Lower leg skin (tissue), 4 donors: ENCODE measurements at regions of chr15 and their contacts with region 1.

Region 1: GRCh38 chr15:99029341-99030144 is 22.0 kb upstream of the PGPEP1L start:
- DNase-seq: no peak
- H3K4me3 ChIP-seq: no peak overlapping the region
- CTCF ChIP-seq: no peak
- POLR2A ChIP-seq: no peak

Region 2: GRCh38 chr15:98700519-98700918 is 329.0 kb before region 1 on chr15:
- intact Hi-C with region 1: no loop called
- DNase-seq: no peak
- H3K4me3 ChIP-seq: no peak overlapping the region
- CTCF ChIP-seq: no peak
- POLR2A ChIP-seq: no peak

Region 3: GRCh38 chr15:98842192-98842966 is 187.2 kb before region 1 on chr15:
- intact Hi-C with region 1: no loop called
- DNase-seq: no peak
- H3K4me3 ChIP-seq: no peak overlapping the region
- CTCF ChIP-seq: no peak
- POLR2A ChIP-seq: no peak

Region 4: GRCh38 chr15:98996619-98997018 is 32.9 kb before region 1 on chr15:
- intact Hi-C with region 1: loop called (anchors 1 kb)
- DNase-seq: no peak
- H3K4me3 ChIP-seq: no peak overlapping the region
- CTCF ChIP-seq: no peak
- POLR2A ChIP-seq: no peak